IMR-90 (cell line): ENCODE measurements at regions of chr6 and their contacts with region 1.

Region 1: GRCh38 chr6:2841264-2842138 is at the start of gene SERPINB1:
- DNase-seq: peak; percentile 97
- ATAC-seq: peak; percentile 92
- H3K4me3 ChIP-seq: peak within 1 kb of the TSS; percentile 34
- H3K27ac ChIP-seq: peak within 1 kb of the TSS; percentile 80
- H3K4me1 ChIP-seq: peaks cover 19% of the 10 kb centered on the region
- H3K27me3 ChIP-seq: no peaks in the 10 kb centered on the region
- CTCF ChIP-seq: no peak
- POLR2A ChIP-seq: peak; percentile 79
- RAD21 ChIP-seq: peak; percentile 16; the same call in 1 of the 2 replicates
- total RNA-seq, gene SERPINB1: 6.1 TPM in 2 replicates

Region 2: DNA sequence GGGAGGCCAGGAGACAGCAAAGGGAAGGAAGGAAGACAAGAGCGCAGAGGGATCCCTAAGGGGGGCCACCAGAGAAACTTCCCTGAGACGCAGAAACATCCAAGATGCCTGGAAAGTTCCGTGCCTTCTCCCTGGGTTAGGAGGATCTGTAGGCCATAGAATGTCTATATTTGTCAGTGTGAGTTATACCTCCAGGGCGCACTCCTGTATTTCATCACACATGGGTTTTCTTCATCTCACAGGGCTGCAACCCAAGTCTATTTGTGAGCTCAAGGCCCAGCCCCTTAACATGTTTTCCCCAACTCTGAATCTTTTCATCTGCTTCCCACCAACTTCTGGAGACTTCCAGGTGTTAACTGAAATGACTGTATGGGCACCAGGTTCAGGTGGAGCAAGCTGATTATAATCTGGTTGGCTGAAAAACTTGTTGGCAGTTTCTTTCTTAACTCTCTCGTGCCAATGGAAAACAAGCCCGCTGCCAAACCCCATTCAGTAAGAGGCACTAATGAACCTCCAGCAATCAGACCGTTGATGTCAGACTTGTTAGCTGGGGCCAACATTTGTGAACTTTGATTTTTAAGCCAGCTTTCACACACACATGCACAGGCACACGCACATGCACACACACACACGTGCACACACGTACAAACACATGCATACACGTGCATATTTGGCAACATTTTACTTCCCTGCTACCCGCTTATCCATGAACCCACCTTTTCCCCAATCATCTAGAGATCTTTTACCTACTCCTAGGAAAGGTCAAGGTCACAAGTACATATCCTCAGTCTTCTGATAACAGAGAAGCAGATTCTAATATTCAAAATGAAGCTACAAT is 348.6 kb before region 1 on chr6:
- CTCF ChIA-PET with region 1: no interaction called
- POLR2A ChIA-PET with region 1: no interaction called
- dilution Hi-C with region 1: no loop called
- in situ Hi-C with region 1: no loop called
- intact Hi-C with region 1: no loop called
- DNase-seq: no peak
- ATAC-seq: no peak
- H3K4me3 ChIP-seq: no peak overlapping the region
- H3K27ac ChIP-seq: no peak overlapping the region
- H3K4me1 ChIP-seq: peaks cover 2% of the 10 kb centered on the region; the same call in 1 of the 2 replicates
- H3K27me3 ChIP-seq: peaks cover 17% of the 10 kb centered on the region
- CTCF ChIP-seq: no peak
- POLR2A ChIP-seq: no peak
- RAD21 ChIP-seq: no peak

Region 3: GRCh38 chr6:2931970-2932748 is 90.7 kb after region 1 on chr6:
- CTCF ChIA-PET with region 1: interaction called, 24 read pairs
- POLR2A ChIA-PET with region 1: no interaction called
- dilution Hi-C with region 1: no loop called
- in situ Hi-C with region 1: loop called (anchors 5 kb)
- intact Hi-C with region 1: loop called (anchors 1 kb)
- DNase-seq: peak; percentile 68
- ATAC-seq: peak; percentile 97
- H3K4me3 ChIP-seq: no peak overlapping the region
- H3K27ac ChIP-seq: no peak overlapping the region
- H3K4me1 ChIP-seq: no peaks in the 10 kb centered on the region
- H3K27me3 ChIP-seq: no peaks in the 10 kb centered on the region
- CTCF ChIP-seq: peak; percentile 90
- POLR2A ChIP-seq: no peak
- RAD21 ChIP-seq: peak; percentile 91

Region 4: GRCh38 chr6:3052481-3053230 is 211.2 kb after region 1 on chr6:
- CTCF ChIA-PET with region 1: no interaction called
- POLR2A ChIA-PET with region 1: no interaction called
- dilution Hi-C with region 1: no loop called
- in situ Hi-C with region 1: loop called (anchors 10 kb)
- intact Hi-C with region 1: loop called (anchors 2 kb)
- DNase-seq: no peak
- ATAC-seq: no peak
- H3K4me3 ChIP-seq: no peak overlapping the region
- H3K27ac ChIP-seq: no peak overlapping the region
- H3K4me1 ChIP-seq: no peaks in the 10 kb centered on the region
- H3K27me3 ChIP-seq: peaks cover 14% of the 10 kb centered on the region; the same call in 1 of the 2 replicates
- CTCF ChIP-seq: no peak
- POLR2A ChIP-seq: no peak
- RAD21 ChIP-seq: no peak

Region 5: DNA sequence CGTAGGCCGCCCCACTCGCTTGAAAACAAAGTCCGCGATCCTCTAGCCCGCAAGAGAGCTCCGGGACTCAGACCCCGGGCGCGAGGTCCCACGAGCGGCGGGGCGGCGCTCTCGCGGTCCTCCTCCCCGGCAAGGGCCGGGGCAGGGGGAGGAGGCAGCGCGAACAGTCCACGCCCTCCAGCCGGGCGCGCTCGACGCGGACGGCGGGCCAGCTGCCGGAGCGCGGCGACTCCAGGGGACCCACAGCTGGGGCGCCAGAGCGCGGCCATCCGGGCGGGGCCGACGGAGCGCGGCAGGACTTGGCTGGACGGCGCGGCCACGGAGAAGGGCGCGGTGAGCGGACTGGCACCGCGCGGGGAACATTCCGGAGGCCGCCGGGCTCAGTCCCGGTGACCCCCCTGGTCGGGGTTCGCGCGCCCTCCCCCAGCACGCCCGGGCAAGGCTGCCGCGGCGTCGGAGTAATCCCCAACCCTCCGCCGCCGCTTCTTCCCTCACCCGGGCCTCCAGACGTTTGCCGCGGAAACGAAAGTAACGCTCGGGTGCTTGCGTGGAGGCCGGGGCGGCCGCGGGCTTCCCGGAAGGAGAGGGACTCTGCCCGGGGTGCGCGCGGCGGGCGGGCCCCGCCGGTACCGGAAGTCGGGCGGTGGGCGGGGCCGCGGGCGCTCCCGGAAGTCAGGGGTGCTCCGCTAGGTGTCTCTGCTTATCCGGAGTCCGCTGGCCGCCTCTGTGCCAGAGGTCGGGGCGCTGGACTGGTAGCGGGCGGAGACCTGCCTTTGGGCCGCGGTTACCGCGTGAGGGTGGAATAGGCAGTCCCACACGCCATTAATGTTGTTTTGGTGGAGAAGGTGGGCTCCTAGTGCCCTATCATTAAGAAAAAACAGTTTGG is 227.1 kb after region 1 on chr6 and contains the start of gene RIPK1:
- CTCF ChIA-PET with region 1: no interaction called
- POLR2A ChIA-PET with region 1: no interaction called
- dilution Hi-C with region 1: no loop called
- in situ Hi-C with region 1: no loop called
- intact Hi-C with region 1: no loop called
- DNase-seq: peak; percentile 84
- ATAC-seq: peak; percentile 80
- H3K4me3 ChIP-seq: peak within 1 kb of the TSS; percentile 83
- H3K27ac ChIP-seq: peak within 1 kb of the TSS; percentile 95
- H3K4me1 ChIP-seq: peaks cover 7% of the 10 kb centered on the region; the same call in 1 of the 2 replicates
- H3K27me3 ChIP-seq: no peaks in the 10 kb centered on the region
- CTCF ChIP-seq: peak; percentile 48
- POLR2A ChIP-seq: peak; percentile 92
- RAD21 ChIP-seq: no peak
- total RNA-seq, gene RIPK1: 25.6 and 28.6 TPM in 2 replicates